ENCODE measurements at regions of chr3 and their contacts with region 1.

Region 1: GRCh38 chr3:116614795-116615362 is 94.7 kb upstream of the TUSC7 start:
- DNase-seq: no peak
- ATAC-seq: peak; percentile 78
- H3K4me3 Mint-ChIP-seq: no peak overlapping the region
- H3K27ac Mint-ChIP-seq: no peak overlapping the region
- H3K4me1 Mint-ChIP-seq: peaks cover 3% of the 10 kb centered on the region; the same call in 1 of the 2 replicates
- H3K27me3 Mint-ChIP-seq: no peaks in the 10 kb centered on the region
- CTCF ChIP-seq: peak; percentile 44

Region 2: DNA sequence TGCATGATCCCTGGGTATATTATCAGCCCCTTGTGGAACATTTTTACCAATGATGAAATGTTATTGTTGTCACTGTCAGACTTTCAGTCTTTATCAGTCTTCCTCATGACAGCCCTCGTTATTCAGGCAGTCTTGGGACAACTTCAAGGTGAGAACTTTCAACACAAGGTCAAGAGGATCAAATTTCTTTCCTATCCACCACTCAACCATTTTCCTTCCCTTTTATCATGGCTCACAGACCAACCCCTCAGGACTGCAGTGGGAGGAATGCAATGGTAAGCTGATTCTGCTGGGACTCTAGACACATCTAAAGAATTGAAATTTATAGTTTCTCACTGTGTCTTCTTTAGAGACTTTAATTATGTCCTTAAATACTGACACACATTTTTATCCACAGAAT is 62.6 kb before region 1 on chr3:
- CTCF ChIA-PET with region 1: no interaction called
- POLR2A ChIA-PET with region 1: no interaction called
- DNase-seq: no peak
- ATAC-seq: peak; percentile 56; the same call in 1 of the 2 replicates
- H3K4me3 Mint-ChIP-seq: no peak overlapping the region
- H3K27ac Mint-ChIP-seq: no peak overlapping the region
- H3K4me1 Mint-ChIP-seq: peaks cover 9% of the 10 kb centered on the region
- H3K27me3 Mint-ChIP-seq: no peaks in the 10 kb centered on the region
- CTCF ChIP-seq: no peak

Region 3: GRCh38 chr3:116757315-116757714 is 142.4 kb after region 1 on chr3:
- CTCF ChIA-PET with region 1: interaction called, 19 read pairs
- POLR2A ChIA-PET with region 1: interaction called, 3 read pairs
- DNase-seq: no peak
- ATAC-seq: no peak
- H3K4me3 Mint-ChIP-seq: no peak overlapping the region
- H3K27ac Mint-ChIP-seq: no peak overlapping the region
- H3K4me1 Mint-ChIP-seq: peaks cover 20% of the 10 kb centered on the region
- H3K27me3 Mint-ChIP-seq: no peaks in the 10 kb centered on the region
- CTCF ChIP-seq: no peak

Measured in WTC11 (cell line).